T-cell (primary cell): ENCODE measurements at regions of chrX and their contacts with region 1.

Region 1: GRCh38 chrX:135556055-135556454 is 35.6 kb downstream of the INTS6L start:
- DNase-seq: no peak
- ATAC-seq: no peak
- H3K4me3 ChIP-seq: no peak overlapping the region
- H3K4me3 Mint-ChIP-seq: no peak overlapping the region
- H3K27ac ChIP-seq: no peak overlapping the region
- H3K27ac Mint-ChIP-seq: no peak overlapping the region
- H3K4me1 ChIP-seq: no peaks in the 10 kb centered on the region
- H3K4me1 Mint-ChIP-seq: no peaks in the 10 kb centered on the region
- H3K27me3 ChIP-seq: no peaks in the 10 kb centered on the region
- H3K27me3 Mint-ChIP-seq: peaks cover 0 to 14% of the 10 kb centered on the region in 2 donors

Region 2: DNA sequence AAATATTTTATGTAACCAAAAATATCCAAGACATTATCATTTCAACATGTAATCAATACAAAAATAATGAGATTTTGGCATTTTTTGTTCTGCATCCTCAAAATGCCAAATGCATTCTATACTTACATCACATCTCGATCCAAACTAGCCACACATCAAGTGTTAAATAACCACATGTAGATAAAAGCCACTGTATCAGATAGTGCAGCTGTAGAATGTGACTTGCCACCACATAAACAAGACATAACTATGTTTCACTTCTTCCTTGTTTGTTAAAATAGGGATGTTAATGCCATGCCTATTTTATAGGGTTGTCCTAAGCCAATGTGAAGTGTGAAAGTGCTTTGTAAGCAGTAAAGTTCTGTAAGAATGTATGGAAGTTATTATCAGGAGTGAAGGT is 14.7 kb before region 1 on chrX:
- CTCF ChIA-PET with region 1: interaction called in 1 of 2 experiments, 3 read pairs
- POLR2A ChIA-PET with region 1: interaction called in 1 of 2 experiments, 15 read pairs
- DNase-seq: no peak
- ATAC-seq: no peak
- H3K4me3 ChIP-seq: no peak overlapping the region
- H3K4me3 Mint-ChIP-seq: no peak overlapping the region
- H3K27ac ChIP-seq: no peak overlapping the region
- H3K27ac Mint-ChIP-seq: peak overlapping the region in 1 of 2 donors; percentile 48
- H3K4me1 ChIP-seq: peaks cover 22 to 33% of the 10 kb centered on the region in 2 experiments
- H3K4me1 Mint-ChIP-seq: peaks cover 34 to 70% (median 59%) of the 10 kb centered on the region in 3 donors
- H3K27me3 ChIP-seq: no peaks in the 10 kb centered on the region
- H3K27me3 Mint-ChIP-seq: peaks cover 0 to 7% of the 10 kb centered on the region in 2 donors

Region 3: DNA sequence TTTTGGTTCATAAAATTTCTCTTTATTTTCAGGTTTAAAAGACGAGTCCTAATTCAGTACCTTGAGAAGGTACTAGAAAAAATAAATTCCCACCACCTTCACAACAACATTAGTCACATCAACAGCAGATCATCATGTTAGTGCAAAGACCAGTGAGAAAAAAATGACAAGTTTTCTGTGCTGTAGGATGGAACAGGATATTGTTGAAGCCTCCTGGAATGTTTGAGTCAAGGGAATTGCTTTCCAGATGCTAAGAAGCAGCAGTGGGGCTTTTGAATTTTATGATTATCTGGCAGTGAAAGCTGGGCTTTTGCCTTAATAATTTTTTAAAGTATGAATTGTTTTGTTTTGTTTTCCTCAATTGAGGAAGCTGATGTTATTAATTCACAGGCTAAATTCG is 25.4 kb after region 1 on chrX:
- CTCF ChIA-PET with region 1: no interaction called
- POLR2A ChIA-PET with region 1: no interaction called
- DNase-seq: no peak
- ATAC-seq: no peak
- H3K4me3 ChIP-seq: no peak overlapping the region
- H3K4me3 Mint-ChIP-seq: no peak overlapping the region
- H3K27ac ChIP-seq: no peak overlapping the region
- H3K27ac Mint-ChIP-seq: no peak overlapping the region
- H3K4me1 ChIP-seq: no peaks in the 10 kb centered on the region
- H3K4me1 Mint-ChIP-seq: no peaks in the 10 kb centered on the region
- H3K27me3 ChIP-seq: no peaks in the 10 kb centered on the region
- H3K27me3 Mint-ChIP-seq: peaks cover 0 to 9% of the 10 kb centered on the region in 2 donors